Natural killer cell (primary cell): ENCODE measurements at regions of chr5 and their contacts with region 1.

Region 1: GRCh38 chr5:150217873-150218692 is 28.2 kb downstream of the SLC6A7 start:
- DNase-seq: peak; percentile 79 to 89
- ATAC-seq: peak; percentile 88 to 99 (median 99)
- H3K4me3 ChIP-seq: no peak overlapping the region
- H3K4me3 Mint-ChIP-seq: no peak overlapping the region
- H3K27ac ChIP-seq: no peak overlapping the region
- H3K27ac Mint-ChIP-seq: no peak overlapping the region
- H3K4me1 ChIP-seq: no peaks in the 10 kb centered on the region
- H3K4me1 Mint-ChIP-seq: peaks cover 0 to 9% of the 10 kb centered on the region in 2 donors
- H3K27me3 ChIP-seq: peaks cover 2% of the 10 kb centered on the region
- H3K27me3 Mint-ChIP-seq: peaks cover 0 to 24% of the 10 kb centered on the region in 2 donors
- CTCF ChIP-seq: peak; percentile 96

Region 2: DNA sequence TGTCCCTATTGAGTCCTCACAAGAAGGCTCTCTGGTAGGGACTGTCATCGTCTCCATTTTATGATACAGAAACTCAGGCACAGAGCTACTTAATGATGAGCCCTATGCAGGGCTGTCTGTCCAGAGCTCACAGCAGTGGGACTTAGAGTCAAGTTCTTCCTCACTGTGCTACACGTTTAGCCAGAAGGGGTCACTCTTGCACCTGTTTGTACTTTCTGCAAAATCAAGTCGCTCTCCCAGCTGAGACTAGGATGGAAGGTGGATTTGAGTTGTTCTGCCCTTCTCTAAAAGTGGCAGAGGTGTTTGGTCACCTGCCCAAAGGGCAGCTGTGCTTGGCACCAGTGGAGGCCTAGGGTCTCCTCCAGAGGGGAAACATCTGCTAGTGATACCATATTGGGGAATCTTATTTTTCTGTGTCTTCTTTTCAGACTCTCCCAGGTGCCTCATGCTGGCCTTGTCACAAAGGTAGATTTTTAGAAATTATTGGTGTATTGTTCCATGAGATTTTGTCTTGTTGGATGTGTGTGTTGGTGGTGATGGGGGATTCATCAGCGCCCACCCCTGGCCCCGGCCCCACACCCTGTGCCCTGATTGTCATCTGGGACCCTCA is 383.7 kb before region 1 on chr5:
- intact Hi-C with region 1: loop called (anchors 1 kb)
- DNase-seq: peak; percentile 20 to 80
- ATAC-seq: peak; percentile 40 to 67 (median 63)
- H3K4me3 ChIP-seq: no peak overlapping the region
- H3K4me3 Mint-ChIP-seq: no peak overlapping the region
- H3K27ac ChIP-seq: no peak overlapping the region
- H3K27ac Mint-ChIP-seq: no peak overlapping the region
- H3K4me1 ChIP-seq: no peaks in the 10 kb centered on the region
- H3K4me1 Mint-ChIP-seq: no peaks in the 10 kb centered on the region
- H3K27me3 ChIP-seq: no peaks in the 10 kb centered on the region
- H3K27me3 Mint-ChIP-seq: no peaks in the 10 kb centered on the region
- CTCF ChIP-seq: peak; percentile 48

Region 3: DNA sequence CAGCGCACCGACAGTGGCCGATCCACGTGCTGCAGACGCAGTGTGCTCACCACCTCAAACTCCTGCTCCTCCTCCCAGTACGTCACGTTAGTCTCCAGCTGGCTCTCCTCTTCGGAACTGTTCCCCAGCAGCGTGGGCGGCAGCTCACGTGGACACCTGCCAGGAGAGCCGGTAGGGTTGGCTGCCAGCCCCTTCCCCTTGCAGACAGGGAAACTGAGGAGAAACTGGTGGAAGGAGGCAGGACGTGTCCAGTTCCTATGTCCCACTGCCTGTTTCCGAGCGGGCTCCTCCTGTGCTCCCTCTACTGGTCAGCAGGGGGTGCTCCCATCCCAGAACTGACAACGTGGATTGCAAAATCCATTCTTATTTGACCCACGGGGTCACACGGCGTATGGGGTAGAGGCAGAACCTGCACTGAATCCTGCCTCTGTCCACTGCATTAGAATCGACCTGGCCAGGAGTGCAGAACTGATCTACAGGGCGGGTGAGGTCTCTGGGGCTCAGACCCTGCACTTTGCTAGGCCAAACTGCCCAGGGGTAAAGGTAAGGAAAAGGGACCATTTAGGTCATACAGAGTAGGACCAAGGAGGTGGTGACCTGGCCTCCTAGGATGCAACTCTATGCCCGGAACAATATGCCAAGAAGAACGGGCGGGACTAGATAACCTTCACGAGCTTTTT is 88.1 kb before region 1 on chr5:
- intact Hi-C with region 1: loop called (anchors 1 kb)
- DNase-seq: peak; percentile 53 to 60
- ATAC-seq: peak; percentile 62 to 89 (median 79)
- H3K4me3 ChIP-seq: no peak overlapping the region
- H3K4me3 Mint-ChIP-seq: peak overlapping the region; percentile 62
- H3K27ac ChIP-seq: no peak overlapping the region
- H3K27ac Mint-ChIP-seq: peak overlapping the region; percentile 45 to 74
- H3K4me1 ChIP-seq: peaks cover 27% of the 10 kb centered on the region
- H3K4me1 Mint-ChIP-seq: peaks cover 21 to 43% of the 10 kb centered on the region in 2 donors
- H3K27me3 ChIP-seq: no peaks in the 10 kb centered on the region
- H3K27me3 Mint-ChIP-seq: peaks cover 0 to 3% of the 10 kb centered on the region in 2 donors
- CTCF ChIP-seq: peak; percentile 81

Region 4: DNA sequence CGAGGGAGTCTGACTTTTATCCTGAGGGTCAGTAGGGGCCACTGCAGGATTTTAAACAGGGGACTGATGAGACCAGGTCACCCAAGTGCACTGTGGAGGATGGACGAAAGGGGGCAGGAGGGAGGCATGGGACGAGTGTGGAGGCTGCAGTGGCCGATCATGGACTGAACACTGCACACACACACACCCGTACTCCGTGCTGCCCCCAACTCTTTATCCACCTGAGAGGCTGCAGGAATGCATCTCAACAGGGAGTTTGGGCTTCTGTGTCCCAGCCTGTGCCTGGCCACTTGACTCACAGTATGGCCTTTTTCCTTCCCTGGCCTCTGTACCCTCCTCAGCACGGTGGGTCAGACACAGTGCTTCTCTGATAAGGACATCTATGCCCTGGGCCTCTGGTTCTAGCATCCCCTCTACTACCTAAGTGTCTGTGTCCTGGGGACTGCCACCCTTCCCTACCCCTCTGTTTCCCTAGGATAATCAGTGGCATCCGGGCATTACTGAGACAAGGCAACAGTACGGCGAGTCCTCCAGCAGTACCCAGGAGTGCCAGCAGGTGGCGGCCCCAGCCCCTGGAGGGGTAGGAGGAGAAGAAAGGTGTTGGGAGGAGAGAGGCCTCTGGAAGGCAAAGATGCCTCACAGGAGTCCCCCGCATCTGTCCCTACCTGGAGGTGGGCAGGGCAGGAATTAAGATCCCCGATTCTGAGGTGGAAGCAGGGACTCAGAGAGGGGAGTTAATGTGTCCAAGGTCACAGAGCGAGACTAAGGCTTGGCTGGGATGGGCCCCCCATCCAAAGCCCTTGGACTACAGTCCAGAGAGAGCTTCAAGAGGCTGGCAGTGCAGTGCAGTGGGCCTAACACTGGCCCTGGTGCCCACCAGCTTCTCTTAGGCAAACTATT is 56.6 kb before region 1 on chr5:
- intact Hi-C with region 1: loop called (anchors 1 kb)
- DNase-seq: peak; percentile 73 to 76
- ATAC-seq: peak; percentile 65 to 97 (median 92)
- H3K4me3 ChIP-seq: no peak overlapping the region
- H3K4me3 Mint-ChIP-seq: no peak overlapping the region
- H3K27ac ChIP-seq: no peak overlapping the region
- H3K27ac Mint-ChIP-seq: no peak overlapping the region
- H3K4me1 ChIP-seq: peaks cover 1% of the 10 kb centered on the region
- H3K4me1 Mint-ChIP-seq: peaks cover under 1 to 11% of the 10 kb centered on the region in 2 donors
- H3K27me3 ChIP-seq: no peaks in the 10 kb centered on the region
- H3K27me3 Mint-ChIP-seq: peaks cover 20 to 26% of the 10 kb centered on the region in 2 donors
- CTCF ChIP-seq: peak; percentile 94

Region 5: DNA sequence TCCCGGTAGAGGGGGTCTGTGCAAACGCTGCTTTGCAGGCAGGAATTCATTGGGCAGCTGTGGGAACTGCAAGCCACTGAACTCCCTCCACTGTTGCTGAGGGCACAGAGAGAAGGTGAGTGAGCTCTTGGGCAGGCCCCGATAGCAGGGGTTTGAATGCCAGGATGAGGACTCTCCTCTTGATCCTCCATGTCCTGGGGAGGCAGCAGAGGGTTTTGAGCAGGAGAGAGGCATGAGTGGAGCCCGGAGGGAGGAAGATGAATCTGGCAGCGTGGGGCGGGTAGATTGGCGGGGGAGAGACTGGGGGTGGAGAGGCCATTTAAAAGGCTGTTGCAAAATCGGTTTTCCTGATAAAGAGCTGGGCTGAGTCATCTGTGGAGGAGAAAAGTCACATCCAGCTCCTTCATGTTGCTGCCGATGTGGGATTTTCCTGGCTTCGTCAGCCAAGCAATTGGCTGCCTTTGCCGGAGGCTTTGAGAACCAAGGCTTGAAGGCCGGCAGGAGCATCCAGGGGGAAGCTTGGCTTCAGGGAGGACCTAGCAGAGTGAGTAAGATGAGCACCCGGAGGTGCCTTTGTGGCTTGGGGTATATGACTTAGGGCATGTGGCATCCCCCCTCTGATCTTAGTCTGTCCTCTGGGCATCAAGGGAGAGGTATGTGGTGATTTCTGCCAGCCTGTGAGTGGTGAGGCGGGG is 422.4 kb after region 1 on chr5 and contains the start of gene SYNPO:
- intact Hi-C with region 1: no loop called
- DNase-seq: no peak
- ATAC-seq: no peak
- H3K4me3 ChIP-seq: no peak within 1 kb of the TSS
- H3K4me3 Mint-ChIP-seq: no peak within 1 kb of the TSS
- H3K27ac ChIP-seq: no peak within 1 kb of the TSS
- H3K27ac Mint-ChIP-seq: no peak within 1 kb of the TSS
- H3K4me1 ChIP-seq: no peaks in the 10 kb centered on the region
- H3K4me1 Mint-ChIP-seq: no peaks in the 10 kb centered on the region
- H3K27me3 ChIP-seq: no peaks in the 10 kb centered on the region
- H3K27me3 Mint-ChIP-seq: peaks cover 8 to 29% of the 10 kb centered on the region in 2 donors
- CTCF ChIP-seq: no peak
- total RNA-seq, gene SYNPO: 0.16 to 0.48 TPM in 2 of 3 donors, not detected in the other